A673 (cell line): ENCODE measurements at regions of chr3 and their contacts with region 1.

Region 1: GRCh38 chr3:12556671-12557472 is at the start of gene MKRN2:
- DNase-seq: peak; percentile 93
- H3K4me3 ChIP-seq: peak within 1 kb of the TSS; percentile 85
- H3K27ac ChIP-seq: peak within 1 kb of the TSS; percentile 94
- H3K4me1 ChIP-seq: peaks cover 10% of the 10 kb centered on the region
- H3K27me3 ChIP-seq: no peaks in the 10 kb centered on the region
- CTCF ChIP-seq: no peak
- total RNA-seq, gene MKRN2: 45.7 and 47.3 TPM in 2 replicates

Region 2: GRCh38 chr3:12663936-12664908 is 107.3 kb after region 1 on chr3 and contains the start of gene RAF1:
- CTCF ChIA-PET with region 1: no interaction called
- POLR2A ChIA-PET with region 1: no interaction called
- intact Hi-C with region 1: loop called (anchors 5 kb)
- DNase-seq: peak; percentile 99
- H3K4me3 ChIP-seq: peak within 1 kb of the TSS; percentile 89
- H3K27ac ChIP-seq: peak within 1 kb of the TSS; percentile 100
- H3K4me1 ChIP-seq: peaks cover 28% of the 10 kb centered on the region
- H3K27me3 ChIP-seq: no peaks in the 10 kb centered on the region
- CTCF ChIP-seq: no peak
- total RNA-seq, gene RAF1: 127 and 130 TPM in 2 replicates

Region 3: GRCh38 chr3:13711906-13712650 is 1155.2 kb after region 1 on chr3:
- CTCF ChIA-PET with region 1: no interaction called
- POLR2A ChIA-PET with region 1: no interaction called
- intact Hi-C with region 1: no loop called
- DNase-seq: no peak
- H3K4me3 ChIP-seq: no peak overlapping the region
- H3K27ac ChIP-seq: no peak overlapping the region
- H3K4me1 ChIP-seq: no peaks in the 10 kb centered on the region
- H3K27me3 ChIP-seq: no peaks in the 10 kb centered on the region
- CTCF ChIP-seq: no peak